WTC11 (cell line): ENCODE measurements at regions of chr12 and their contacts with region 1.

Region 1: GRCh38 chr12:101582937-101583336 is 11.8 kb upstream of the MYBPC1 start:
- DNase-seq: no peak
- ATAC-seq: no peak
- H3K4me3 Mint-ChIP-seq: no peak overlapping the region
- H3K27ac Mint-ChIP-seq: no peak overlapping the region
- H3K4me1 Mint-ChIP-seq: peaks cover 25% of the 10 kb centered on the region
- H3K27me3 Mint-ChIP-seq: no peaks in the 10 kb centered on the region
- CTCF ChIP-seq: no peak

Region 2: GRCh38 chr12:100427078-100427477 is 1155.9 kb before region 1 on chr12:
- CTCF ChIA-PET with region 1: no interaction called
- POLR2A ChIA-PET with region 1: interaction called, 10 read pairs
- DNase-seq: no peak
- ATAC-seq: no peak
- H3K4me3 Mint-ChIP-seq: no peak overlapping the region
- H3K27ac Mint-ChIP-seq: no peak overlapping the region
- H3K4me1 Mint-ChIP-seq: no peaks in the 10 kb centered on the region
- H3K27me3 Mint-ChIP-seq: no peaks in the 10 kb centered on the region
- CTCF ChIP-seq: no peak

Region 3: DNA sequence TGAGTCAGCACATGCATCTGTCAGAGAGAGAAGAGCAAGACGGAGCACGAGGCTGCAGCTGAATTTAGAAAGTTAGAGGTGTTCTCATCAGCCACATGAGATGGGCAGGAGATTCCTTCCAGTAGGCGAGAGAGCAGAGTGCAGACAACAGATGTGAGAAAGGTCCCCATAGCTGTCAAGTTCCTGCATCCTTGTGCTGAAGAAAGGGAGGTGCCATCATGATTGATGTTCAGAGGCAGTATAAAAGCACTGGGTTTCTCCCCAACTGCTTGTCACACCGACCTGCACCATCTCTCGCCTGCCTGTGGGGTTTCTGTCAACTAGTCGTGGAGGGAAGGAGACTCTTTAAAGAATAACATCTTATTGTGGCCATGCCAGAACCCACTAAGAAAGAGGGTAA is 11.8 kb after region 1 on chr12 and contains the start of gene MYBPC1:
- CTCF ChIA-PET with region 1: no interaction called
- POLR2A ChIA-PET with region 1: no interaction called
- DNase-seq: no peak
- ATAC-seq: peak; percentile 86
- H3K4me3 Mint-ChIP-seq: no peak within 1 kb of the TSS
- H3K27ac Mint-ChIP-seq: no peak within 1 kb of the TSS
- H3K4me1 Mint-ChIP-seq: peaks cover 28% of the 10 kb centered on the region
- H3K27me3 Mint-ChIP-seq: no peaks in the 10 kb centered on the region
- CTCF ChIP-seq: no peak
- total RNA-seq, gene MYBPC1: not detected in 3 replicates